ENCODE measurements at regions of chr21 and their contacts with region 1.

Region 1: DNA sequence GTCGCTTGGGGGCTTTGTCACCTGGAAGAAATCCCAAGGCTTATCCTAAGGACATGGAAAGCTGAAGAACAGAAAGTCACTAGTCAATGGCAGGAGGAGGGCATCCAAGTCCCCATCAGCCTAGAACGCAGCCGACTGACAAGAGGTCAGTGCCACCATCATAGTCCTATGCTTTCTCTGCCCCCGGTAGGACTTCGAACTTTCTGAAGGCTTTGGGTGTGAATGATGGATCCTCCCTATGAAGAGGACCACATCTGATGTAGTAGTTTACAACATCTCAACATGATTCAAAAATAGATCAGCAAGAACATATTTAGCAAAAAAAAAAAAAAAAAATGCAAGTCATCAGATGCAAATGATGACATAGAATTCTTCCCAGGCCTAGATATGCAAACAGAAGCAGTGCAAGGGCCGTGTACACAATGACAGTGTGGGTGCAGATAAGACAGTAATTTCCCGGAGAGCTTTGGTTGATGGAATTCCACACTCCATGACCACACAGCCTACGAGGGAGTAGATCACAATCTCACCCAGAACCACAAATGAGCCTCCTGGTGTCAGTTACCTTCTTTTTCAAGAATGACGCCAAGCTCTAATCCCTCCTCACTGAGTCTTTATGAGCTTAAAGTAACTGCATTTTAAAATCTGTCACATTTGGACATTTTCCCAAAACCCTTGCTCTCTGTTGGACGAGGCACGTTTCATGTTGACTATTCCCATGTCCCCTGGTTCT is 88.2 kb downstream of the PSMG1 start:
- DNase-seq: no peak
- ATAC-seq: no peak
- H3K4me3 Mint-ChIP-seq: no peak overlapping the region
- H3K27ac Mint-ChIP-seq: no peak overlapping the region
- H3K4me1 Mint-ChIP-seq: peaks cover 16% of the 10 kb centered on the region
- H3K27me3 Mint-ChIP-seq: no peaks in the 10 kb centered on the region; the same call in 1 of the 2 replicates
- CTCF ChIP-seq: no peak

Region 2: GRCh38 chr21:38112219-38112789 is 982.7 kb before region 1 on chr21:
- CTCF ChIA-PET with region 1: no interaction called
- POLR2A ChIA-PET with region 1: no interaction called
- DNase-seq: no peak
- ATAC-seq: no peak
- H3K4me3 Mint-ChIP-seq: no peak overlapping the region
- H3K27ac Mint-ChIP-seq: no peak overlapping the region
- H3K4me1 Mint-ChIP-seq: no peaks in the 10 kb centered on the region
- H3K27me3 Mint-ChIP-seq: 0 out of 2 replicates have a peak, but pooled peaks cover 2% of the 10 kb centered on the region
- CTCF ChIP-seq: no peak

Region 3: GRCh38 chr21:39071623-39072214 is 23.3 kb before region 1 on chr21:
- CTCF ChIA-PET with region 1: no interaction called
- POLR2A ChIA-PET with region 1: no interaction called
- DNase-seq: no peak
- ATAC-seq: no peak
- H3K4me3 Mint-ChIP-seq: no peak overlapping the region
- H3K27ac Mint-ChIP-seq: no peak overlapping the region
- H3K4me1 Mint-ChIP-seq: no peaks in the 10 kb centered on the region
- H3K27me3 Mint-ChIP-seq: peaks cover 31% of the 10 kb centered on the region
- CTCF ChIP-seq: no peak

Region 4: DNA sequence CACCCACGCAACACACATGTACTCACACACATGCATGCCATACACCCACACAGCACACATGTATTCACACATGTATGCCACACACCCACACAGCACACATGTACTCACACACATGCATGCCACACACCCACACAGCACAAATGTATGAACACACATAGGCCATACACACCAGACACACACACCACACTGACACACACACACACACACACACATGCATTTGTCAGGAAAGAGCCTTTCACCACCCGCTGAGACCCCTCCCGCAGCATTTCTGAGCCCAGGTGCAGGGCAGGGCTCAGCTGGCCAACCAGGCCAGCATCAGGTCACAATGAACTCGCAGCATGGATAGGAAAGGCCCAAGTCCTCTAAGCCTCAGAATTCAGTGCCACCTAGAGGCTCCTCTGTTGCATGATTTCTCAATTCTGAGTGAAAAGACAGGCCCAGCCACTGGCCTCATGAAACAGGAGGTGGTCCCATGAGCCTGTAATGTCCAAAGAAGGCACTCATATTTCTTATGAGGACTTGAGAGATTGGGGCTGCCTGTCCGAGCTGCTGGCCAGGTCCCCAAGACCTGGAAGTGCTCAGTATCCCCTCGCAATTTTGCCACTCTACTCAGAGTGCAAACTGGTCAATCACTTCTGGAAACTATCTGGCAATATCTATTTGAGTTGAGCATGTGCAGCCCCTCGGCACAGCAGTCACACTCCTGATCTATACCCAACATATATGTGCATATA is 30.9 kb after region 1 on chr21:
- CTCF ChIA-PET with region 1: interaction called, 12 read pairs
- POLR2A ChIA-PET with region 1: no interaction called
- DNase-seq: peak; percentile 70
- ATAC-seq: peak; percentile 98
- H3K4me3 Mint-ChIP-seq: no peak overlapping the region
- H3K27ac Mint-ChIP-seq: 0 out of 2 replicates have a peak overlapping the region, but pooled peaks have one; percentile 17
- H3K4me1 Mint-ChIP-seq: peaks cover 16% of the 10 kb centered on the region
- H3K27me3 Mint-ChIP-seq: no peaks in the 10 kb centered on the region
- CTCF ChIP-seq: no peak